Activated T-helper 1 cell treated with anti-CD3 and anti-CD28 coated beads, Interleukin-12 subunit alpha, Interleukin-12 subunit beta, Interleukin-2, Interleukin-4 antibody, amounts not matched to agents 30 ng/mL and 10 ng/mL and 1 ng/mL, durations not matched to agents 14 hours and 24 hours and 36 hours (primary cell): ENCODE measurements at regions of chr7 and their contacts with region 1.

Region 1: GRCh38 chr7:156612930-156613329 is 27.6 kb upstream of the RNF32 start:
- DNase-seq: peak; percentile 82
- H3K4me3 Mint-ChIP-seq: peak overlapping the region; percentile 63
- H3K27ac Mint-ChIP-seq: peak overlapping the region; percentile 25
- H3K4me1 Mint-ChIP-seq: peaks cover 37% of the 10 kb centered on the region
- H3K27me3 Mint-ChIP-seq: peaks cover 56% of the 10 kb centered on the region

Region 2: DNA sequence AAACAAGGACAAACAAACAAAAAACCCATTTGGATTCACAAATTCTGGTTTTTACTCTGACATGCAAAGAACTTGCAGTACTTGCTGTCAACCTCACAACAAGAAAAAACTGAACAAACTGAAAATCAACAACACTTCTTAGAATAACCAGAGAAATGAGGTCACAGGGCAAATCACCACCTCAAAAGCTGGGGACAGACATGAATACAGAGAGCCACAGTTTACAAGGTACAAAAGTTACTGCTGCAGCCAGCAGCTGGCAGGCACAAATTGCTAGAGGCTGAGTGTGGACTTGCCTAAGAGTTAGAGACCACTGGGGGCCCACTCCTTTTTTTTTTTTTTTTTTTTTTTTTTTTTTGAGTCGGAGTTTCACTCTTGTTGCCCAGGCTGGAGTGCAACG is 12.7 kb after region 1 on chr7:
- intact Hi-C with region 1: loop called (anchors 1 kb)
- DNase-seq: peak; percentile 35
- H3K4me3 Mint-ChIP-seq: no peak overlapping the region
- H3K27ac Mint-ChIP-seq: peak overlapping the region; percentile 70
- H3K4me1 Mint-ChIP-seq: peaks cover 17% of the 10 kb centered on the region
- H3K27me3 Mint-ChIP-seq: peaks cover 16% of the 10 kb centered on the region

Region 3: GRCh38 chr7:156668181-156668624 is 55.3 kb after region 1 on chr7:
- intact Hi-C with region 1: no loop called
- DNase-seq: no peak
- H3K4me3 Mint-ChIP-seq: no peak overlapping the region
- H3K27ac Mint-ChIP-seq: no peak overlapping the region
- H3K4me1 Mint-ChIP-seq: no peaks in the 10 kb centered on the region
- H3K27me3 Mint-ChIP-seq: no peaks in the 10 kb centered on the region

Region 4: GRCh38 chr7:156773966-156774365 is 161.0 kb after region 1 on chr7:
- intact Hi-C with region 1: loop called (anchors 1 kb)
- DNase-seq: no peak
- H3K4me3 Mint-ChIP-seq: no peak overlapping the region
- H3K27ac Mint-ChIP-seq: no peak overlapping the region
- H3K4me1 Mint-ChIP-seq: peaks cover 53% of the 10 kb centered on the region
- H3K27me3 Mint-ChIP-seq: no peaks in the 10 kb centered on the region